GM18951 (cell line): ENCODE measurements at regions of chr22 and their contacts with region 1.

Region 1: DNA sequence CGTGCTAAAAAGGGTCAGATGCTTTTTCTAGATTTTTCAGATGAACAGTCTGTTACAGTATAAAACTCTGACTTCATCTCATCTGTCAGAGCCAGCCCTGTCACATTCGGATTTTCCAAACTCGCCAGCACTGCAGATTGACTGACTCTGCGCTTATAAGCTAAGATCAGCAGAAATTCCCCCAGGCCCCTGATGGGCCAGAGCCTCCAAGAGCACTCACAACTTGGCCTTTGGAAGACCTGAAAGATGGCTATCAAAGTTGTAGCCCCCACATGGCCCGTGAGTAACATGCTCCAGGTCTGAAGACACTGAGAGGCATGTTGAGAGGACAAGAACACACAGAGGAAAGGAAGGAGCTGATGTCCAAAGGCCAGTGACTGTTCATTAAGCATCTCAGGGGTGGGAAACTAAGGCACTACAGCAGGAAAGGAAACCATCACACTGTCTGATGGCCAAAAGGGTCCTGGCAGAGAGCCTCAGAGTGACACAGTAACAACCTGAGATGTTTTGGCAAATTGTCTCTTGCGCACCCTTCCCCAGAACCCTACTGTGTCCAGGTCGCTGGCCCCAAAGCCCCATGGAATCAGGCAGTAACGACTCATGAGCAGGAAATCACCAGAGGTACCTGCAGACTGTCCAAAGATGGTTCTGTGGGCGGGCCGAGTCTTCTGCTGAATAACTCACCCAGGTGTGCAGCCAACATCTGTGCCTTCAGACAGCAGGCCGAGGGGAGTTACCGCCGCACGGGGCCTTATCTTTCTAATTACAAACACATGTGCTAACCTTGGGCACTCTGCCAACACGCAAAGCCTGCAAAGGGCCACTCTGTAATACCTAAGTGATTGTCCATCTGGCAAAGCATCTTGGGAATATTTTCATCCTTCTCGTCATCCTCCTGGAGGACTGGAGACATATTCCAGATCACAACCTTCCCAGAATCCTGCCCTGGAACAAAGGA is 23.6 kb downstream of the HIRA start:
- POLR2A ChIP-seq: no peak

Region 2: DNA sequence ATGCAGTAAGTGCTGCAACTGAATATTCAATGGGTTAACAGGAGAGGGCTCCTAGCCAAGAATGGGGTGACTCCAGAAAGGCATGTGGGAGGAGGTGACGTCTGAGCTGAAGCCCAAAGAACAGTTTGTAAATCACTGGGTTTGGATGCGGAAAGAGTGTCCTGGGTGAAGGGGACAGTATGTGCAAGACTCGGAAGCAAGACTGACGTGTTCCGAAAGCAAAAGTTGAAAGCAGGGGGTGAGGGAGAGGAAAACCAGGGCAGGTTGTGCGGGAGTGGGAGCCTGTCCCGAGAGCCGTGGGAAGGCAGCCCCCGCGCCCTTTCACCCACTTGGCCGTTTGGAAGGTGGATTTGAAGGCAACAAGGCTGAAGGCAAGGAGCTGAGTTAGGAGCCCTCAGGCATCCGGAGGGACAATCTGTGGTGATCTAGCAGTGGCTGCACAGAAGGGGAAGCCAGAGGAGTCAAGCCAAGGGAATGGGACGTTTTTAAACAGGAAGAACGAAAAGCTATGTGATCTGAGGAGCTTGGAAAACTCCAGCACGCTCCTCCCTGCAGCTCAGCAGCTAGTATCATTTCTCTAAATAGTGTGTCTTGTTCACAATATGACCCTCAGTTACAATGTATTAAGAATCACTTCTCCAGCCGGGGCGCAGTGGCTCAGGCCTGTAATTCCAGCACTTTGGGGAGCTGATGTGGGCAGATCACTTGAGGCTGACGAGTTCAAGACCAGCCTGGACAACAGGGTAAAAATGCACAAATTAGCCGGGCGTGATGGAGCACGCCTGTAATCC is 1836.9 kb before region 1 on chr22:
- in situ Hi-C with region 1: no loop called
- POLR2A ChIP-seq: no peak

Region 3: GRCh38 chr22:19232623-19233022 is 175.3 kb before region 1 on chr22:
- in situ Hi-C with region 1: loop called (anchors 10 kb)
- POLR2A ChIP-seq: no peak

Region 4: DNA sequence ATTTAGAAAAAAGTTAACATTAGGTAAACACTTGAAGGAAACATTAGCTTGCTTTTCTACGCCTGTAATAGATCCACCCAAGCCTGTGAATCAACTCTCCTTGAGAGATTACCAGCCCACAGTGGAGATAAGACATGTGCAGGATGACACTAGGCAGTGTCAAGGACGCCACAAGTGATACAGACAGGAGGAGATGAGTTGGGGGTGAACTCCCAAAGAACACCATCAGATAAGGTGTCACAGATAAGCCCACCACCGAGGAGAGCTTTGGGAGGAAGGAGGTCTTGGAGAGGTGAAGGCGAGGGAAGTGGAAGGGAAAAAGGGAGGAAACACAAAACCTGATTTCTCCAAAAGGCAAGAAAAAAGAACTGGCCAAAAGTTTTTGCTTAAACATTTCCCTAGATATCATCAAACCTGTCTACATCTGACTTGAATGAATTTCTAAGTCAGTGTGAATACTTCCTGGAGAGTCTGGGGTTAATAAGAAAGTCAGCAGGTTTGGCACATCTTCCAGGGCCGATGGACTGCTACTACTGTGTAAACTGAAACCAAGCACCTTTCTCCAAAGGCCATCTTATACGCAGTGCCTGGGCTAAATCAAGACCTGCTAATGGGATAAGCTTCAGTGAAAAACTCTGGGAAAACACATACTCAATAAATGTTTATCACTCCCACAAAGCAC is 131.9 kb before region 1 on chr22:
- in situ Hi-C with region 1: no loop called
- POLR2A ChIP-seq: no peak